WTC11 (cell line): ENCODE measurements at regions of chr3 and their contacts with region 1.

Region 1: DNA sequence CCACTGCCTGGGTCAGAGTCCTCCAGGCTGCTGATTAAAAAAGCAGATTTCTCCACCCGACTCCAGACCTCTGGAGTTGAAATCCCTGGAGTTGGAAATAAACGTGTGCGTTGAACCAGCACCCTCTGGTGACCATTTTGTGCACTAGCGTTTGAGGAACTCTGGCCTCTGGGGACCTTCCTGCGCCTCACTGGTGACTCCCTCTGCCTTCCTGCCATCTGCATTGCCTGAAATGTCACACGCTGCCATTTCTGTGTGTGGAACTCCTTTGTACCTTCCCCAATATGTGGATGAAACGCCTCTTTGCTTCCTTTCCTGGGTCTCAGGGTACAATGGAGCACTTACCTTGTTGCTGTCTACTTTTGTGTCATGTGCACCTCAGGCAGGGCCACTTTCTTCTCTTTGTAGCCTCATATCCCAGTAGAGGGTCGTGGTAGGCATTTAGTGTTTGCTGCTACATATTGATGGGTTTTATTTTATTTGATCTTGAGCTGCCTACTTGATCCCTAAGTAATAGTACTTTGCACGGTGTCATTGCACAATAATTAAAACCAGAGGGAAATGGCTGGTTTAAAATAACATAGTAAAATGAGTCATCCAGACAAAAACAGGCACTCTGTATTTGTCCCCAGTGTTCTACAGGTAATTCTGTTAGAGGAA is 56.8 kb downstream of the GPR171 start:
- DNase-seq: peak; percentile 73
- ATAC-seq: peak; percentile 94
- H3K4me3 Mint-ChIP-seq: no peak overlapping the region
- H3K27ac Mint-ChIP-seq: no peak overlapping the region
- H3K4me1 Mint-ChIP-seq: peaks cover 10% of the 10 kb centered on the region; the same call in 1 of the 2 replicates
- H3K27me3 Mint-ChIP-seq: no peaks in the 10 kb centered on the region
- CTCF ChIP-seq: peak; percentile 82

Region 2: DNA sequence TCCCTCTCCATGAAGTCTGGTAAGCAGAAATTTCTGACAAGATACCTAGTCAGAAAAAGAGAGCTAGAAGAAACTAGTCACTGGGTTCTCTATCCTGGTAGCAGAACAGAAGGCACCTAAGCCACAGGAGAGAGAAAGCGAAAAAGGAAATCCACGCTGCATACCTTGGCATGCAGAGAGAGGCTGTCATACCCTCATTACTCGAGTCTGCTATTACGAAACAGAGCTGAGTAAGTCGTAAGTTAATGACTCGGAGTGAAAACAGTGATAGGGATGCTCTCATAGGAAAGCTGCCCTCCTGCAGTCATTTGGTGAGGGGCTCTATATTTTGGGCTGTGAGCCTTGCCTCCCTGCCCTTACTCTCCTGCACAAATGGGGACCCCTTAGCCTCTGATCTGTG is 189.8 kb before region 1 on chr3:
- CTCF ChIA-PET with region 1: no interaction called
- POLR2A ChIA-PET with region 1: no interaction called
- DNase-seq: no peak
- ATAC-seq: peak; percentile 26; the same call in 1 of the 2 replicates
- H3K4me3 Mint-ChIP-seq: no peak overlapping the region
- H3K27ac Mint-ChIP-seq: no peak overlapping the region
- H3K4me1 Mint-ChIP-seq: peaks cover 4% of the 10 kb centered on the region
- H3K27me3 Mint-ChIP-seq: peaks cover 3% of the 10 kb centered on the region; the same call in 1 of the 2 replicates
- CTCF ChIP-seq: no peak

Region 3: DNA sequence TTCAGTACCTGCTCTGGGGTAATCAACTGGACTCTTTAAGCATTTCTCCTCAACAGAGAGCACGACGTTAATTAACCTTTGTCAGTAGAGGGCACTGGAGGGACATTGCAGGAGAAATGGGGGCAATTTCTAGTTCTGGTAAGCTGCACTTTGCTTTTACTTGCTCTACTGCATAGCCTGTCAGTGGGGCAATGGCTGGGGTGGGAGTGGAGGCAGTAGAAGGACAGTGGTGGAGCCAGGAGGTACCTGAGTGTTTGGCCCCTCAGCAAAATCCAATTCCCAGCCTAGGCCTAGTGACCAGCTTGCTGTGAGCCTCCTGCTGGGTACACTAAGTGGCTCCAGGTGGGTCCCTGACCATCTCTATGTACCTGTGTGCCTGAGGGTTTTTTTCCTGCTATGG is 79.0 kb before region 1 on chr3:
- CTCF ChIA-PET with region 1: interaction called, 44 read pairs
- POLR2A ChIA-PET with region 1: no interaction called
- DNase-seq: no peak
- ATAC-seq: peak; percentile 96
- H3K4me3 Mint-ChIP-seq: no peak overlapping the region
- H3K27ac Mint-ChIP-seq: no peak overlapping the region
- H3K4me1 Mint-ChIP-seq: no peaks in the 10 kb centered on the region
- H3K27me3 Mint-ChIP-seq: no peaks in the 10 kb centered on the region
- CTCF ChIP-seq: peak; percentile 29

Region 4: GRCh38 chr3:151086484-151087456 is 59.4 kb before region 1 on chr3:
- CTCF ChIA-PET with region 1: interaction called, 12 read pairs
- POLR2A ChIA-PET with region 1: interaction called, 7 read pairs
- DNase-seq: peak; percentile 77
- ATAC-seq: peak; percentile 60
- H3K4me3 Mint-ChIP-seq: peak overlapping the region; percentile 94
- H3K27ac Mint-ChIP-seq: peak overlapping the region; percentile 84
- H3K4me1 Mint-ChIP-seq: peaks cover 58% of the 10 kb centered on the region
- H3K27me3 Mint-ChIP-seq: peaks cover 20% of the 10 kb centered on the region
- CTCF ChIP-seq: 0 out of 2 replicates have a peak, but pooled peaks have one; percentile 20

Region 5: GRCh38 chr3:151130437-151130836 is 15.8 kb before region 1 on chr3:
- CTCF ChIA-PET with region 1: no interaction called
- POLR2A ChIA-PET with region 1: no interaction called
- DNase-seq: no peak
- ATAC-seq: no peak
- H3K4me3 Mint-ChIP-seq: no peak overlapping the region
- H3K27ac Mint-ChIP-seq: no peak overlapping the region
- H3K4me1 Mint-ChIP-seq: peaks cover 7% of the 10 kb centered on the region
- H3K27me3 Mint-ChIP-seq: no peaks in the 10 kb centered on the region
- CTCF ChIP-seq: no peak

Region 6: GRCh38 chr3:151156618-151157216 is 10.5 kb after region 1 on chr3:
- CTCF ChIA-PET with region 1: interaction called, 13 read pairs
- POLR2A ChIA-PET with region 1: no interaction called
- DNase-seq: peak; percentile 25
- ATAC-seq: peak; percentile 91
- H3K4me3 Mint-ChIP-seq: no peak overlapping the region
- H3K27ac Mint-ChIP-seq: no peak overlapping the region
- H3K4me1 Mint-ChIP-seq: peaks cover 15% of the 10 kb centered on the region
- H3K27me3 Mint-ChIP-seq: no peaks in the 10 kb centered on the region
- CTCF ChIP-seq: peak; percentile 16; the same call in 1 of the 2 replicates